Activated naive CD4-positive, alpha-beta T cell treated with anti-CD3 and anti-CD28 coated beads for 36 hours (primary cell): ENCODE measurements at regions of chr14 and their contacts with region 1.

Region 1: DNA sequence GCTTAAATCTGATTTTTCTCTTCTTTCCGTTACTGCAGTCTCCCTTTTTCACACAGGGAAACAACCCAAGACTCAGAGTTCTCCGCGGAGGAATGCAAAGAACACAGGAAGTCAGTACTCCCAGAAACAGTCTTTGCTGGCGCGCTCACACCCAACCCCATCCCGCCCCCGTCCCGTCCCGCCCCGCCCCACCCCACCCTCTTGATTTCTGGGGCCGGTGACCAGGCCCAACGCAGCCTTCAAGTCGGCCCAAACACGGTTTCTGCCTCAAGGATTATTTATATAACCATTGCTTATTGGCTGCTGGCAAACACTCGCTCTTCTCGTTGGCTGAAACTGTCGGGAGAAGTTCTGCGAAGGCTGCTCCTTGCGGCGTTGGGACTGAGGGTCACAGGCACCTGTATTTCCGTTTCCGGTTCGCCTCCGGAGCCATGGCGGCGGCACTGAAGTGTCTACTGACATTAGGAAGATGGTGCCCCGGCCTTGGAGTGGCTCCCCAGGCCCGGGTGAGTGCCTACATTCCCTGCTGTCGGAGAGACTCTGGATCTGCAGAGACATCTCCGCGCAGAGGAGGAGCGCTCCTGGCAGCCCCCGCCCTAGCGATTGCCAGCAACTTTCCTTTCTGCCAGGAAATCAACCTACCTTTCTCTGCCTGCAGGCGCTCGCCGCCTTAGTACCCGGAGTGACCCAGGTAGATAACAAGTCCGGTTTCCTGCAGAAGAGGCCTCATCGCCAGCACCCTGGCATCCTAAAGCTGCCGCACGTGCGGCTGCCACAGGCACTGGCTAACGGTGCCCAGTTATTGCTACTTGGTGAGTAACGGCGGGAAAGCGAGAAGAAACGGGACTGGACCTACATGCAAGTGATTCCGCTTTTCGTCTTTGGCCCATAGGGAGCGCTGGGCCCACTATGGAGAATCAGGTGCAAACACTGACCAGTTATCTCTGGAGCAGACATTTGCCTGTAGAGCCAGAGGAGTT is at the start of gene METTL17:
- DNase-seq: peak; percentile 94
- H3K4me3 Mint-ChIP-seq: peak within 1 kb of the TSS; percentile 86
- H3K27ac Mint-ChIP-seq: peak within 1 kb of the TSS; percentile 86
- H3K4me1 Mint-ChIP-seq: peaks cover 19% of the 10 kb centered on the region
- H3K27me3 Mint-ChIP-seq: no peaks in the 10 kb centered on the region
- total RNA-seq, gene METTL17: 90.9 to 97.5 TPM

Region 2: GRCh38 chr14:20956376-20956976 is 33.4 kb before region 1 on chr14:
- CTCF ChIA-PET with region 1: no interaction called
- intact Hi-C with region 1: loop called (anchors 1 kb)
- DNase-seq: no peak
- H3K4me3 Mint-ChIP-seq: no peak overlapping the region
- H3K27ac Mint-ChIP-seq: no peak overlapping the region
- H3K4me1 Mint-ChIP-seq: peaks cover 15% of the 10 kb centered on the region
- H3K27me3 Mint-ChIP-seq: no peaks in the 10 kb centered on the region

Region 3: DNA sequence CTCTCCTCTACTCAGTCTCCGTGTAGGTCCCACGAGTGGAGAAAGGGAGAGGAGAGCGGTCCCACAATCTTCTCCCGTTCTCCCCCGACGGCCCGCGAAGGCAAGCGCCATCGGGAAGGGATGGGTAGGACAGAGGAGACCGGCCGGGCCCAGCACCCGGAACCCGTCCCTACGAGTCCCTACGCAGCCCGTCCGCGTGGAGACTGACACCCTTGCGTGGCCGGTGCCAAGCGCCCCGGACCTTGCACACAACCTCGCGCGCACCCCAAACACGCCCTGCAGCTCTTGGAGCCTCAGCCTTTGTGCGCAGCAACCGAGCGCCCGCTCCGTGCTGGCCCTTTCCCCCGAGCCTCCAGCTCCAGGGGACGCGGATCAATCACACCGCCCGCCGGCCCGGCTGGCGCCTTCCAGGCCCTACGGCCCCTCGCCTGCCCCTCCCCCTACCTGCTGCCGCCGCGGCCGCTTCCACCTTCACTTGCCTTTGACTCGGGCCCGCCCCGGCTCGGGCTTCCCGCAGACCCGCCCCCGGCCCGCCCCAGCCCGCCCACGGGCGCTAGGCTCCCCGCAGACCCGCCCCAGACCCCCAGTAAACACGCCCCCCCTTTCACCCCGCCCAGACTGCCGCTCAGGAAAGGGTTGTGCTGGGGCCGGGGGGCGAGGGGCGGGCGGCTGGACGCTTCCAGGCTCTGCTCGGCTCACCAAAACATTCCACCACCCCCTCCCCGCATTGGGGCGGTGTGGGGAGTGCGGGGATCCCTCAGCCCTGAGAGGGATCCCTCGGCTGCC is 34.9 kb after region 1 on chr14 and contains the start of gene NDRG2:
- CTCF ChIA-PET with region 1: no interaction called
- intact Hi-C with region 1: loop called (anchors 1 kb)
- DNase-seq: peak; percentile 68
- H3K4me3 Mint-ChIP-seq: peak within 1 kb of the TSS; percentile 72
- H3K27ac Mint-ChIP-seq: no peak within 1 kb of the TSS
- H3K4me1 Mint-ChIP-seq: peaks cover 10% of the 10 kb centered on the region
- H3K27me3 Mint-ChIP-seq: no peaks in the 10 kb centered on the region
- total RNA-seq, gene NDRG2: 8.4 to 8.8 TPM